Cardiac septum (tissue), 1 donor: ENCODE measurements at regions of chr9 and their contacts with region 1.

Region 1: GRCh38 chr9:100216178-100216787 is 117.2 kb downstream of the INVS start:
- DNase-seq: peak; percentile 72

Region 2: DNA sequence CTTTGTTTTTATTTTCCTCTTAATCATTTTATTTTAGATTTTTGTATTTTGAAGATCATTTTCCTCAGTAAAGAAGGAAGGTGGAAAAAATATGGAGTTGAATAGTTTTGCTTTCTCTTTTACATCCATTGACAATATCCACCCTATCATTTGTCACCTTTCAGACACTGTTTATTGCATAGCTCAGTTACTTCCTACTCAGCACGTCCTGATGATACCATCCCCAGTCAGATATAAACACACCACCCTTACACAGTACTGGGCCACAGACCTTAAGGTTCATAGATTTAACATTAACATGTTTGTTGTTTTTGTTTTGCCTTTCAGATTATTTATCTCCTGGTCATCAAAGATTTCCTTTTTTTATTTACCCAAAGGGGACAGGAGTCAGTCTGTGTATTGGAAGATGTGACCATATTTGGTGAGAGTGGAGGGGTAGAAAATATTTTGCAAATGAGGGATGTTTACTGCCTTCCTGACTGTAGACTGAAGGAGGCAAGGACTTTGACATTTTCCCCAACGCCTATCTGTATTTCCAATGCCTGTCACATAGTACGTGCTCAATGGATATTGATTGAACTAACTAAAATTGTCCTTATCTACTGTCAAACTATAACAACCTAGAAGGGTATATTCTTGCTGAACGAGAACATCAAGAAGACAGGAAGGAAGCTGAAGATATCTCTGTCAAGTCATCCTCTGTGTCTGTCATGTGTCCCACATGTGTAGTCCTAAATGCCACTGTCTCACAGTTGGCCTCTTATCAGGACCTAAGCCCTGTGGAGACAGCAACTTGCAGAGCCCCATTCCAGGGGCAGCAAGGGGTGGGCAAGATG is 294.2 kb before region 1 on chr9:
- intact Hi-C with region 1: no loop called
- DNase-seq: no peak

Region 3: GRCh38 chr9:100028201-100028784 is 188.0 kb before region 1 on chr9:
- intact Hi-C with region 1: loop called (anchors 2 kb)
- DNase-seq: no peak

Region 4: DNA sequence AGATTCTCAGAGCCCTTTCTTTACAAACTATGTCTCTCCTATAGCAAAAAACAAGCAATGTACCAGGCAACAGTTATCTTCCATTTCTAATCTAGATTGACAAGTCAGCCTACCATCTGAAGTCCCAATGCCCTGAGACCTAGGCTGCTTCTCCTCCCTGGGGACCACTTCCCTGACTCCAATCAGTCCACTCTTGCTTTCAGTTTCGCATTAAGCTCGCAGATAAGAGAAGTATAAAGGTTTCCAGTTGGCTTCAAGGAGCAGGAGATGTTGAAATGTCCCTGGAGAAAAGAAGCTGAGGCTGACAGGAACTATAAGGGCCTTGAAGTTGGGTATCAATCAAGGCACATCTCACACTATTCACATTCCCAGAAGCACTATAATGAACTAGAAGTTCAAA is 149.7 kb before region 1 on chr9:
- intact Hi-C with region 1: no loop called
- DNase-seq: no peak